ENCODE measurements at regions of chr10 and their contacts with region 1.

Region 1: DNA sequence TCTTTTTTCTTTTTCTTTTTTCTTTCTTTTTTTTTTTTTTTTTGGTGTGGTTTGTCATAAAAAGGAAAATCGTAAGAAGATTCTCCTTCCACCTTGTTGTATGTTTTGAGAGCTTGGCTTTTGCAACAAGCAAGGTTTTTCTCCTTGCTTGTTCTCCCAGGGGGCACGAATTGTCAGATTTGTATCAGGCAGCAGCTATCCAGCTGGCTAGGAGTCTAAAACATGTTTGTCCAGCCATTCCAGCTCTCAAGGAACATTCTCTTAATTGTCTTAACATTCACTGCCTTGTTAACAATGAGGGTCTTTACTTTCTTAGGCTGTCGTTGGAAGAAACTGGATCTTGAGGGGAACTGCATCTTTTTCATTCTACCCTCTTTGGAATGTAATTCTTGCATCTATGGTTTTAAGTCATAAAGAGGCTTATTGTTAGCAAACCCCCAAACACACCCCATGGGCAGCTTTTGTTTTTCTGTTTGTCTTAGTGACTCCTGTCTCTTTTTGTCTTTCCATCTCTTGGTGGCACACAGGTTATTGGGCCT is 14.7 kb downstream of the SHTN1 start:
- DNase-seq: no peak
- ATAC-seq: no peak

Region 2: DNA sequence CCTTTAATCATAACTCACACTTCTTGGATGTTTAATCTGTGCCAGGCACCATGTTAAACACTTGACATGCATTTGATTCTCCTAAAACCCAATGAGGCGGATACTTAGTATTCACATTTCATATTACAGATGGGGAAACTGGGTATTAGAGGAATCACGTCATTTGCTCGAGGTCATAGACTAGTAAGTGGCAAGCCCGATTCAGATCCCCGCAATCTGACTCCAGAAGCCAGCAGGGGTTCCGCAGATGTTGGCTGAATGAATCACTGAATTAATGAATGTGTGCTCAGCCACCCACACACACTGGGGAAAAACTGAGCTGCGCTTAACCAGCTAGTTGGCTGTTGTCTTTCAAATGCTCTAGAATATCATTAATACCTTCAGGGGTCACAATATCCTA is 163.5 kb before region 1 on chr10:
- intact Hi-C with region 1: loop called in 1 of 2 experiments (anchors 10 kb)
- DNase-seq: no peak
- ATAC-seq: no peak

Measured in left cardiac atrium (tissue), 4 donors.